ENCODE measurements at regions of chr17 and their contacts with region 1.

Region 1: GRCh38 chr17:7561028-7561575 is 617 bp upstream of the SENP3 start:
- DNase-seq: peak; percentile 75 to 85 (median 76)
- H3K4me3 ChIP-seq: peak overlapping the region; percentile 72 to 84
- H3K4me3 Mint-ChIP-seq: peak overlapping the region; percentile 89 to 98 (median 94)
- H3K27ac ChIP-seq: peak overlapping the region; percentile 96
- H3K27ac Mint-ChIP-seq: peak overlapping the region; percentile 95 to 99 (median 97)
- H3K4me1 ChIP-seq: peaks cover 37% of the 10 kb centered on the region
- H3K4me1 Mint-ChIP-seq: peaks cover 25 to 37% (median 30%) of the 10 kb centered on the region in 4 donors
- H3K27me3 ChIP-seq: no peaks in the 10 kb centered on the region
- H3K27me3 Mint-ChIP-seq: no peaks in the 10 kb centered on the region

Region 2: GRCh38 chr17:7280519-7281429 is 280.3 kb before region 1 on chr17:
- CTCF ChIA-PET with region 1: interaction called, 4 read pairs
- POLR2A ChIA-PET with region 1: no interaction called
- intact Hi-C with region 1: loop called (anchors 1 kb)
- DNase-seq: peak; percentile 82 to 86 (median 85)
- H3K4me3 ChIP-seq: peak overlapping the region; percentile 23 to 58
- H3K4me3 Mint-ChIP-seq: peak overlapping the region; percentile 77 to 90 (median 82)
- H3K27ac ChIP-seq: peak overlapping the region; percentile 41
- H3K27ac Mint-ChIP-seq: peak overlapping the region; percentile 36 to 84 (median 66)
- H3K4me1 ChIP-seq: peaks cover 25% of the 10 kb centered on the region
- H3K4me1 Mint-ChIP-seq: peaks cover 4 to 28% (median 18%) of the 10 kb centered on the region in 4 donors
- H3K27me3 ChIP-seq: peaks cover 10% of the 10 kb centered on the region
- H3K27me3 Mint-ChIP-seq: peaks cover 15 to 19% of the 10 kb centered on the region in 2 donors

Region 3: DNA sequence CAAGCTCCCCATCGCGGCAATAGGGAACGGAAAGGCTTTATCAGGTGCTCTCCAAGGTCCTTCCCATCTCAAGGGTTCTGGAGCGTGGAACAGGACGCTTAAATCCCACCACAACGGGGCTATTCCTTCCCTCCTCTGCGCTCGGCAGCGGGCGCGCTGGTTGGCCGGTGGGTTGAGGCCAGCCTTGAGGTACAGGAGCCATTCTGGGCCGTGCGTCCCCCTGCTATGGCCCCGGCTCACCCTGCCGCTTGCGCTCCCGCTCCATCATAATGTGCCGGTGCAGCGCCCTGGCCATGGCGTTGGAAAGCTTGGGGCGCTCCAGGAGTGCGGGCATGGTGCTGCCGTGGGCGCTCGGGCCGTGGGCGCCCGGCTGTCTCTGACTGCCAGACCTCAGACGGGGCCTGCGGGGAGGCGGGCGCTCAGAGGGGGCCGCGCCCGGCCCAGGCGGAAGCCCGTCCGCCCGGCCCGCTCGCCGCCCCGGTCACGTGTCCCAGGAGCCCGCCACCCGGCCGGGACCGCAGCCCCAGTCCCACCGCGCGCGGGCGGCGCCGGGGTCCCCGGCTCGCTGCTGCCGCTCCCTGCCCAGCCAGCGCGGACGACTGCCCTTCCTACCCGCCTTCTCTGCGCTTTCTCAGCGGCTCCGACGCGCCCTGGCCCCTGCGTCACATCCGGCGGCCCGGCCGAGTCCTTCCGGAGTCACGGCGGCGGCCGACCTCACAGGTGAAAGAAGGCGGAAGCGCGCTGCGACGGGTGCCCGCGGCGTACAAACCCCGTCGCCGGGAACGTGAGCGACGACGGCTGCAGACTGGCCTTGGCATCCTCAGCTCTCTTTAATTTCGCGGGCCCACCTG is 246.2 kb before region 1 on chr17 and contains the start of gene GPS2:
- CTCF ChIA-PET with region 1: no interaction called
- POLR2A ChIA-PET with region 1: no interaction called
- intact Hi-C with region 1: no loop called
- DNase-seq: peak; percentile 92 to 94 (median 93)
- H3K4me3 ChIP-seq: peak within 1 kb of the TSS; percentile 68 to 76
- H3K4me3 Mint-ChIP-seq: peak within 1 kb of the TSS; percentile 83 to 97 (median 92)
- H3K27ac ChIP-seq: peak within 1 kb of the TSS; percentile 83
- H3K27ac Mint-ChIP-seq: peak within 1 kb of the TSS; percentile 92 to 98 (median 96)
- H3K4me1 ChIP-seq: peaks cover 50% of the 10 kb centered on the region
- H3K4me1 Mint-ChIP-seq: peaks cover 29 to 64% (median 44%) of the 10 kb centered on the region in 4 donors
- H3K27me3 ChIP-seq: no peaks in the 10 kb centered on the region
- H3K27me3 Mint-ChIP-seq: no peaks in the 10 kb centered on the region
- total RNA-seq, gene GPS2: 127 to 132 TPM

Region 4: DNA sequence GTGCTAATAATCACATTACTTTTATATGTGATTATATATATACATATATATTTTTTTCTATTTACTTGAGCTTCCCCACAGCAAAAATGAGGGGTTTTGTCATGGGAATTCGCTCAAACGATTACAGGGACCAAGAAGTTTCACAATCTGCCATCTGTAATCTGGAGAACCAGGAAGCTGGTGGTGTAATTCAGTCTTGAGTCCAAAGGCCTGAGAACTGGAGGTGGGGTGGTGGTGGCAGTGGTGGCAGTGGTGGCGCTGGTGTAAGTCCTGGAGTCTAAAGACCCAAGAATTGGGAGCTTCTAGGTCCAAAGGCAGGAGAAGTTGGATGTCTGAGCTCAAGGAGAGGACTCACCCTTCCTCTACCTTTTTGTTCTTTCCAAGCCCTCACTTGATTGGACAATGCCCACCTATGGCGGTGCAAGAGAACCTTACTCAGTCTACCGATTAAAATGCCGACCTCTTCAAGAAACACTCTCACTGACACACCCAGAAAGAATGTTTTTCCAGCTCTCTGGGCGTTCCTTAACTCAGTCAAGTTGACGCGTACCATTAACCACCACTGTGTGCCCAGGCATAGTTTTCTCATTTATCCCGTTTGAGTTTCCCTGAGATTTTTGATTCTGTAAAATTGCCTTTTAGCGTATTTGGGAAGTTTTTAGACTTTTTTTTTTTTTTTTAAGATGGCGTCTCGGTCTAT is 45.0 kb before region 1 on chr17:
- CTCF ChIA-PET with region 1: interaction called, 173 read pairs
- POLR2A ChIA-PET with region 1: interaction called, 40 read pairs
- intact Hi-C with region 1: loop called (anchors 1 kb)
- DNase-seq: no peak
- H3K4me3 ChIP-seq: no peak overlapping the region
- H3K4me3 Mint-ChIP-seq: no peak overlapping the region
- H3K27ac ChIP-seq: no peak overlapping the region
- H3K27ac Mint-ChIP-seq: peak overlapping the region in 4 of 7 donors; percentile 17 to 74 (median 50)
- H3K4me1 ChIP-seq: no peaks in the 10 kb centered on the region
- H3K4me1 Mint-ChIP-seq: peaks cover 0 to 2% (median 0%) of the 10 kb centered on the region in 4 donors
- H3K27me3 ChIP-seq: no peaks in the 10 kb centered on the region
- H3K27me3 Mint-ChIP-seq: no peaks in the 10 kb centered on the region

Region 5: DNA sequence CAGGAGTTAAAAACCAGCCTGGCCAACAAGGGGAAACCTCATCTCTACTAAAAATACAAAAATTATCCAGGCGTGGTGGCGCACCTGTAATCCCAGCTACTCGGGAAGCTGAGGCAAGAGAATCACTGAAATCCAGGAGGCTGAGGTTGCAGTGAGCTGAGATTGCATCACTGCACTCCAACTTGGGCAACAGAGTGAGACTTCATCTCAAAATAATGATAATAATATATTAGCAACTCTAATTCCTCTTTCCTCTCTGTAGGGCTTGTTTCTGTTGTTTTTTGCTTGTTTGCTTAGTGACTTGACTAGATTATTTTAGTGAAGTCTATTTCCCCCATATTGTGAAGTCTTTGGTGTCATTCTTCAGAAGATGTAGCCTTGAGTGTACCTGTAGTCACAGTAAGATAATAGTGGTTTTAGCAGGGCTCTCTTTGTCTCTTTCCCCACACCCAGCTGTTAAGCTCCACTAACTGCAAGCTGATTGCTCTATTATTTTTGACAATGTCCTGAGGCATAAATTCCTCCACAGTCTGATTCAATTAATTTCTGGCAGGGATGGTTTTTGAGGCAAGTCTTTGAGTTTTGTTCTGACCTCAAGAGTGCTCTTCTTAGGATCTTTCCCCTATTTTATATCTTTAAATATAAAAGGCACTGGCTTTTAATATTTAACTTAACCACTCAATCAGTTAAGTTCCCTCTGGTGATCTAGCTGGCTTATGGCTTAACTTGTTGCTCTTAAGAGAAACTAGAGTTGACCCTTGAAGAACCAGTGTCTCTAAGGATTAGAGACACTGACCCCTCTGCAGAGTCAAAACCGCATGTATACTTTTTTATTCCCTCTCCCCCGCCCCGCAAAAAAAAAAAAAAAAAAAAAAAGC is 30.8 kb before region 1 on chr17:
- CTCF ChIA-PET with region 1: interaction called, 14 read pairs
- POLR2A ChIA-PET with region 1: interaction called, 3 read pairs
- intact Hi-C with region 1: no loop called
- DNase-seq: no peak
- H3K4me3 ChIP-seq: no peak overlapping the region
- H3K4me3 Mint-ChIP-seq: no peak overlapping the region
- H3K27ac ChIP-seq: no peak overlapping the region
- H3K27ac Mint-ChIP-seq: no peak overlapping the region
- H3K4me1 ChIP-seq: no peaks in the 10 kb centered on the region
- H3K4me1 Mint-ChIP-seq: no peaks in the 10 kb centered on the region
- H3K27me3 ChIP-seq: no peaks in the 10 kb centered on the region
- H3K27me3 Mint-ChIP-seq: no peaks in the 10 kb centered on the region

Region 6: DNA sequence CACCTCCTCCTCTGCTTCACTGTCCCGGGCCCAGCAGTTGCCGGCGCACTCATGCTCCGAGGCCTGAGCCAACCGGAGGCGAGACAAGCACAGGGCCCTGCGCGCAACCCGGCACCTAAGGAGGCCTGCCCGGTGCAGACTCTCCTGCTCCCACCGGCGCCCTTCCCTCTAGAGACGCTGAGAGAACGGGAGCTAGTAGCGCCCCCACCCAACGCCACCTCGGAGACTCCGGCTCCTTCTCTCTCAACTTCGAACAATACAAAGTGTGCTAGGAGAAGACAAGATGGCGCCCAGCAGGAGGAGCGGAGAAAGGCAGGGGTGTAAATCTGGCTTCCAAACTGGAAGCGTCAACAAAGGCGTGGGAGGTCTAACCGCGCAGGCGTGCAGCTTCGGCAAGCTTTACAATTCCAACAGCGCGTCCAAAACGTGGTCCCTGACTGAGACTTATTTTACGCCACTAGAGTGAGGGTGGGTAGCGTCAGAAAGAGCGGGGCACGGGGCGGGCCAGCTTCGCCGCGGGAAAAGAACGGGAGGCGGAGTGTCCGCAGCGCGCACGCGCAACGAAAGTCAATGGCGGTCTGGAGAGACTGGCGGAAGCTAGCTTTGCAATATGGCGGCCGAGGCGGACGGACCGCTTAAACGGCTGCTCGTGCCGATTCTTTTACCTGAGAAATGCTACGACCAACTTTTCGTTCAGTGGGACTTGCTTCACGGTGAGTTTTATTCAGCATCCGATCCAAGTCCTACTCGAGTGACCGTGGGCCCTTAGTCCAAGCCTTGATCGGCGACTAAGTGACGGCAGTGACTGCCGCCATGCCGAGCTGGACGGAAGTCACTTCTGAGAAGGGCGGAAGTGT is 22.4 kb after region 1 on chr17 and contains the start of gene MPDU1:
- CTCF ChIA-PET with region 1: interaction called, 8 read pairs
- POLR2A ChIA-PET with region 1: interaction called, 34 read pairs
- intact Hi-C with region 1: loop called (anchors 1 kb)
- DNase-seq: peak; percentile 95 to 97 (median 97)
- H3K4me3 ChIP-seq: peak within 1 kb of the TSS; percentile 91 to 92
- H3K4me3 Mint-ChIP-seq: peak within 1 kb of the TSS; percentile 99 to 100 (median 100)
- H3K27ac ChIP-seq: peak within 1 kb of the TSS; percentile 97
- H3K27ac Mint-ChIP-seq: peak within 1 kb of the TSS; percentile 99 to 100 (median 100)
- H3K4me1 ChIP-seq: peaks cover 50% of the 10 kb centered on the region
- H3K4me1 Mint-ChIP-seq: peaks cover 20 to 65% (median 43%) of the 10 kb centered on the region in 4 donors
- H3K27me3 ChIP-seq: no peaks in the 10 kb centered on the region
- H3K27me3 Mint-ChIP-seq: no peaks in the 10 kb centered on the region
- total RNA-seq, gene MPDU1: 23.8 to 25.0 TPM

Region 7: DNA sequence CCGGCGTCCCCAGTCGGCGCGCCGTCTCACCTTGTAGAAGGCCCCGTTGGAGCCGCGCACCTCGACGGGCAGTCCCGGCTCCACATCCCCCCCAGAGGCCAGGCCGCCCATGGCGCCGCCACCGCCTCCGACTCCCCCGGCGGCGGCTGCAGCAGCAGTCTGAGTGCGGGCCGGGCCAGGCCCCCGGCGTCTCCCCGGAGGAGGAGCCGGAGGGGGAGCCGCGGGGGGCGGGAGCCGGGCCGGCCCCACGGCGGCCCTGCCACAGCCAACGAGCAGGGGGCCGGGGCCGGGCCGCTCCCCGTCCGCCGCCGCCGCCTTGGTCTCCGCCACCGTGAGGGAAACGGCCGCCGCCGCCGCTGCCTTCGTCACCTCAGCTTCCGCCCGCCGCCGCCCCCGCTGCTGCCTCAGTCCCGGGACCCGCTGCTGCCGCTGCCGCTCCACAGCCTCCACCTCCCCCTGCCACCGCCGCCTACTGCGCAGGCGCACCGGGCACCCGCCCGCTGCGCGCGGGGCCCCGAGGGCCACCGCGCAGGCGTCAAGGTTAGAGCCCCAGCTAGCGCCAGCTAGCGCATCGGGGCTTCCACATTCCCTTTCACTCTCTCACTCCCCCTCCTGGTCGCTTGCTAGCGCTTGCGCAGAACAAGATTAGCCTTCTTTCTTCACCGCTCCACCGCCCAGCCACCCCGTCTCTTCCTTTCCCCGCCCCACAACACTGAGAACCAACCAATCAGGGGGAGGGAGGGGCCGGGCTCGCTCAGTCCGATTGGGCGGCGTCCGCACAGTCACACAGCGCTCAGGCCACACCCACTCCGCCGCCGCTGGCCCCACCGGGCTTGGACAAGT is 53.5 kb after region 1 on chr17 and contains the start of gene FXR2:
- CTCF ChIA-PET with region 1: interaction called, 6 read pairs
- POLR2A ChIA-PET with region 1: interaction called, 4 read pairs
- intact Hi-C with region 1: loop called (anchors 1 kb)
- DNase-seq: peak; percentile 98 to 100 (median 99)
- H3K4me3 ChIP-seq: peak within 1 kb of the TSS; percentile 74 to 78
- H3K4me3 Mint-ChIP-seq: peak within 1 kb of the TSS; percentile 87 to 95 (median 93)
- H3K27ac ChIP-seq: peak within 1 kb of the TSS; percentile 66
- H3K27ac Mint-ChIP-seq: peak within 1 kb of the TSS; percentile 83 to 98 (median 97)
- H3K4me1 ChIP-seq: peaks cover 42% of the 10 kb centered on the region
- H3K4me1 Mint-ChIP-seq: peaks cover 22 to 49% (median 36%) of the 10 kb centered on the region in 4 donors
- H3K27me3 ChIP-seq: no peaks in the 10 kb centered on the region
- H3K27me3 Mint-ChIP-seq: no peaks in the 10 kb centered on the region
- total RNA-seq, gene FXR2: 44.1 to 46.6 TPM

Measured in CD4-positive, alpha-beta memory T cell (primary cell).